Heart left ventricle (tissue), 16 donors: ENCODE measurements at regions of chr1 and their contacts with region 1.

Region 1: DNA sequence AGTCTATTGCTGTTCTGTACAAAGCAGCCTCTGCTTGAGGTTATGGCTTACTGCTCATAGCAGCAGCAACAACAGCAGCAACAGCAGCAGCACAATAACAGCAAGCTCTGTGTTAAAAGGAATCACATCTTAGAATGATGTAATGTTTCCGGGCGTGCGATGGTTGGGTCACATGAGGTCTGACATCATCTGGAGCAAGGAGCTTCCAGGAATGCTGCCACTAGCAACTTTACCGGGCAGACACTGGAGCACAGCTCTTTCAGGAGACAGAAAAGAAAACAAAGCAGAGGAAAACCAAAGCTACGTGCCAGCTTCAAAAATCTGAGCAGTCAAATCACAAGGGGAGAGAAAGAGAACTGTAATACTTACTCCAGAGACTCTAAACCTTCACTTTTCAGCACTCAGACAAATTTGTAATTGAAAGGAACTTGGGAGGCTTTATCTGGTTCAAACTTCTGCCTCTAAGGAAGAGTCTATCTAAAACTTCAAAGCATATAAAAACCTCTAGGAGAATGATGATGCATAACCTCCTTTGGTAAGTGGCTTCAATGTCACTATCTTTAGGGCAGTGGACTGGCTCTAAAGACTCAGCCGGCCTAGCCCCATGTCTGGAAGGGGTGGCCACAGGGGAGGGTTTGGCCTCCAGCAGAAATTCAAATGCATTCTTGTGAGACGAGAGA is 28.3 kb upstream of the RAB3GAP2 start:
- DNase-seq: peak; percentile 65 to 79 (median 74)
- ATAC-seq: peak; percentile 80 to 99 (median 97)
- H3K4me3 ChIP-seq: peak overlapping the region in 6 of 12 donors; percentile 19 to 48 (median 35)
- H3K27ac ChIP-seq: peak overlapping the region in 11 of 12 donors; percentile 53 to 88 (median 72)
- H3K4me1 ChIP-seq: peaks cover 0 to 21% (median 9%) of the 10 kb centered on the region in 12 donors
- H3K27me3 ChIP-seq: no peaks in the 10 kb centered on the region
- CTCF ChIP-seq: no peak
- POLR2A ChIP-seq: no peak

Region 2: GRCh38 chr1:219582296-219582695 is 718.3 kb before region 1 on chr1:
- intact Hi-C with region 1: no loop called
- DNase-seq: no peak
- ATAC-seq: peak in 3 of 4 donors; percentile 46 to 69 (median 59)
- H3K4me3 ChIP-seq: no peak overlapping the region
- H3K27ac ChIP-seq: peak overlapping the region in 2 of 12 donors; percentile 19 to 23
- H3K4me1 ChIP-seq: peaks cover 0 to 27% (median 7%) of the 10 kb centered on the region in 12 donors
- H3K27me3 ChIP-seq: no peaks in the 10 kb centered on the region
- CTCF ChIP-seq: no peak
- POLR2A ChIP-seq: no peak

Region 3: DNA sequence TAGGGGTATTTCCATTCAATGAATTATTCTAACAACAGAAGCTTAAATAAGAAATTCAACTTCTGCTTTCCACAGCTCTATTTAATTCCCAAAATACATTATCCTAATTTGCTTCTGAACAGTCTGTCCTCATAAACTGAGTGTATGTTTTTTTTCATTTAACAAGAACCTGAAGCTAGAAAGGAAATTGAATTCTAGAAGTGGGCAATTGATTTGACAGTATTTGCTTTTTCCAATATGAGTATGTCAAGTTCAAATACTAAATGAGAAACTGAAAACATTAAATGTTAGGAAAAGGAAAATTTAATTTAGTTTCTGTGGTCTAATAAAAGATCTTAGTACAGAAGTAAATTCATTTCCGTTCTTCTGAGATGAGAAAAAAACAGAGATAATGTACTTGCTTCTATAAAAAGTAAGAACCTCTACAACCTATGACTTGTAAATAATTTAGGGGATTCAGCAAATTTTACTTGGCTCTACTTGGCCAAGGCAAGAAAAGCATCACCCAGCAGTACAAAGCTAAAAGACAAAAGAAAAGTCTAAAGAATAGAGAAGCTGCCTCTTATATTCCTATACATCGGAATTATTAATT is 59.4 kb before region 1 on chr1:
- intact Hi-C with region 1: no loop called
- DNase-seq: no peak
- ATAC-seq: no peak
- H3K4me3 ChIP-seq: no peak overlapping the region
- H3K27ac ChIP-seq: no peak overlapping the region
- H3K4me1 ChIP-seq: peaks cover 0 to 29% (median 10%) of the 10 kb centered on the region in 12 donors
- H3K27me3 ChIP-seq: no peaks in the 10 kb centered on the region
- CTCF ChIP-seq: no peak
- POLR2A ChIP-seq: no peak

Region 4: DNA sequence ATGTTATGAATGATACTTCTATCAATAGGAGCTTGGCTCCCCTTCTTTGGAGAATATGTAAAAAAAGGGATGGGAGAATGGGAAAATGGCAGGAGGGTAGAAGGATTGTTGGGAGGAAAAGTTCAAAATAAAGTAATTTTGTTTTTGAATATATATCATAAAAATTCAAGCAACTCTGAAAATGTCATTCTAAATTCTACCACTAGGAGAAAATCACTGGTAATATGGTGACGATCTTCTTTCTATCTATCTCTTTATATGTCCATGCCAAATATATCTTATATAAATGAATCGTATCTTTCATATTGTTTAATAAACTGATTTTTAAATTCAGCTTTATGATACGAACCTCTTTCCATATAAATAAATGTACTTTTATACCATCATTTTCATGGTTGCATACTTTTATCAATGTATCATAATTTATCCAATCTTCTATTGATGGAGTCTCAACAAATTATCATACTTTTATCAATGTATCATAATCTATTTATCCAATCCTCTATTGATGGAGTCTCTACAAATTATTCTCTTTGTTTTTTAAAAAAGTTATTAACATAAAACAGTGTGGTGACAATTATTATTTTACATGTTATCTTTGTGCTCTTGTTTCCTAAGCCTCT is 153.7 kb after region 1 on chr1:
- intact Hi-C with region 1: loop called in 1 of 10 experiments (anchors 10 kb)
- DNase-seq: no peak
- ATAC-seq: no peak
- H3K4me3 ChIP-seq: no peak overlapping the region
- H3K27ac ChIP-seq: no peak overlapping the region
- H3K4me1 ChIP-seq: peaks cover 0 to 10% (median 0%) of the 10 kb centered on the region in 12 donors
- H3K27me3 ChIP-seq: no peaks in the 10 kb centered on the region
- CTCF ChIP-seq: peak in 5 of 12 donors; percentile 5 to 51 (median 27)
- POLR2A ChIP-seq: no peak